AG04449 (cell line): ENCODE measurements at regions of chr12 and their contacts with region 1.

Region 1: GRCh38 chr12:53065975-53066931 is 12.9 kb downstream of the SPRYD3 start:
- DNase-seq: no peak
- H3K4me3 ChIP-seq: no peak overlapping the region
- CTCF ChIP-seq: peak; percentile 85

Region 2: GRCh38 chr12:52942066-52942900 is 124.0 kb before region 1 on chr12:
- CTCF ChIA-PET with region 1: no interaction called
- POLR2A ChIA-PET with region 1: no interaction called
- DNase-seq: no peak
- H3K4me3 ChIP-seq: no peak overlapping the region
- CTCF ChIP-seq: no peak

Region 3: GRCh38 chr12:53054112-53054833 is 12.0 kb before region 1 on chr12:
- CTCF ChIA-PET with region 1: interaction called, 143 read pairs
- POLR2A ChIA-PET with region 1: interaction called, 19 read pairs
- DNase-seq: no peak
- H3K4me3 ChIP-seq: peak overlapping the region; percentile 49
- CTCF ChIP-seq: no peak

Region 4: DNA sequence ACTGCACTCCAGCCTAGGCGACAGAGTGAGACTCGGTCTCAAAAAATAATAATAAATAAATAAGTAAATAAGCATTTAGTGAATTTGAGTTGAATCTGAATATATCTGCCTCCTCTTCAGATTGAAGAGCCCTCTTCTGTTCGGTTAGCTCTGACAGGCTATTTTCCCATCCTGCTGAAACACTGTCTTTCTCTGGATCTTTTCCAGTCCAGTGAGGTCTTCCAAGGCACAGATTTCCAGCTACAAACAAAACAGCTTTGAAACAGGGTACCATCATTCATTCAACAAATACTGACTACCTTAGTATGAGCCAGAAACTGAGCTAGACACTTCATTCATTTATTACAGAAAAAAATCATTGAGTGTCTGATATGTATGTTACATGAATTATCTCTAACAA is 20.1 kb after region 1 on chr12:
- CTCF ChIA-PET with region 1: interaction called, 655 read pairs
- POLR2A ChIA-PET with region 1: interaction called, 67 read pairs
- DNase-seq: no peak
- H3K4me3 ChIP-seq: no peak overlapping the region
- CTCF ChIP-seq: no peak

Region 5: DNA sequence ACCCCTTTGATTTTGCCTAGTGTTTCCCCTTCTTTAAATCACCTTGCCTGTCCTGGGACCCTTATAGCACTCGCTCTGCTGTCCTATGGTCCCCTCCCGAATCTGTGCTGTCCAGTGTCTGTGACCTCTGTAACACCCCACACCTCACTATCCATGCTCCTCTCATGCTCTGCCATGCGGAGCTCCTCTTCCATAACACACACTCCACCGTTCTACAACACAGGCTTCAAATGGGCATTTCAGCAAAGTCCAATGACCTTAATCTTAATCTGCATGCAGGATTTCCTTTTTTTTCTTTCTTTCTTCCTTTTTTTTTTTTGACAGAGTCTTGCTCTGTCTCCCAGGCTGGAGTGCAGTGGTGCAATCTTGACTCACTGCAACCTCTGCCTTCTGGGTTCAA is 62.9 kb after region 1 on chr12:
- CTCF ChIA-PET with region 1: interaction called, 11 read pairs
- POLR2A ChIA-PET with region 1: no interaction called
- DNase-seq: no peak
- H3K4me3 ChIP-seq: no peak overlapping the region
- CTCF ChIP-seq: no peak

Region 6: DNA sequence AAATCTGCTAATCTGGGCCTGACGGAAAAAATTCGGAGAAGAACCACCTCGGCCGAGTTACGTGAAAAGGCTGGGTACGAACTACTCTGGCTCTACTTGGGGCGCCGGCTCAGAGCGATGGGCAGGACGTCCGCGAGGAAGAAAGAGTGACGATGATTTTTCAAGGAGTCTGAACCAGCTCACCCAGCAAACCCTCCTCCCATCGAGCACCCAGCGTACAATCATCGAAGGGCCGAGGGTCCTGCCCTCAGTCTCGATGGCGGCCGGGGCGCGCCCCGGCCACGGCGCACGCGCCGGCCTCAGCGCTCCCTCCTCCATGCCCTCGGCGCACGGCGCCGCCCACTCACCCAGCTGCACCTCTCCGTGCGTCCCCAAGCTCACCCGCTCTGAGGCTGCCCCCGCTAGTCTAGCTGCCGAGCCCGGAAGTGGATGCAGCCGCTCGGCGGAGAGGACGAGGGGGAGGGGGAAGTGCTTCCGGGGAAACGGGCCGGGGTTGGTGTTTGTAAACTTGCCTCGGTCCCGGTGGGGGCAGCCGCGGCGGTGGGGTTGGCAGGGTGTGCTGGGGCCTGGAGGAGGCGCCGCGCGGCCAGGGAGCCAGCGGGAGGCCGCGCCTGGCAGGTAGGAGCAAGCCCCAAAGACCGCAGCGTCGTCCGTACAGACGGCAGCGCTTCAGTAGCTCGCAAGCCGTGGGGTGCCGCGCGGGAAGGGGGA is 114.1 kb after region 1 on chr12 and contains the starts of genes CSAD and ZNF740:
- CTCF ChIA-PET with region 1: interaction called, 108 read pairs
- POLR2A ChIA-PET with region 1: interaction called, 5 read pairs
- DNase-seq: peak; percentile 70
- H3K4me3 ChIP-seq: peak within 1 kb of the TSS; percentile 84
- CTCF ChIP-seq: no peak

Region 7: DNA sequence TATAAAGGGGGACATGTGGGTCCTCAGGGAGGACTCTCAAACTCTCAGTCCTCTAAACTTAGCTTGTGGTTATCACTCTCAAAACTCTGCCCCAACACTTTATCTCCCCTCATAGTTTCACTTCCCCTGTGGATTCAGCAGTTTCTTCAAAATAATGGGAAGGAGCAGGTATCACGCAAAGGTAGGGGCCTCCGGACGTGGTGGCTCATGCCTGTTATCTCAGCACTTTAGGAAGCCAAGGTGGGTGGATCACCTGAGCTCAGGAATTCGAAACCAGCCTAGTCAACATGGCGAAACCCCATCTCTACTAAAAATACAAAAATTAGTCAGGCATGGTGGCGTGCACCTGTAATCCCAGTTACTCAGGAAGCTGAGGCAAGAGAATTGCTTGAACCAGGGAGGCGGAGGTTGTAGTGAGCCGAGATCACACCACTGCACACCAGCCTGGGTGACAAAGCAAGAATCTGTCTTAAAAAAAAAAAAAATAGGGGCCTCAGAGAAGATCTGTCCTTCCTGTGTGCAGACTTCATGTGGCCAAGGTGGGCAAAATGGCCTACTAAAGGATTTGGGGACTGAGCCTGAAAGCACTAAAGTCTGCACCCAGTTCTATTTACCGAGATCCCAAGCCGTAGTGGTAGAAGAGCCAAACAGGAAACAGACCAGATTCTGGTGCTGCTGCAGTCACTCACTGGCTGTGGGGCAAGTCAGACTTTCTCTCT is 134.4 kb after region 1 on chr12:
- CTCF ChIA-PET with region 1: interaction called, 94 read pairs
- POLR2A ChIA-PET with region 1: interaction called, 7 read pairs
- DNase-seq: no peak
- H3K4me3 ChIP-seq: no peak overlapping the region
- CTCF ChIP-seq: no peak